ENCODE measurements at regions of chr12 and their contacts with region 1.

Region 1: GRCh38 chr12:71636704-71637115 is 26.9 kb downstream of the ZFC3H1 start:
- DNase-seq: peak; percentile 57
- ATAC-seq: peak; percentile 69
- H3K4me3 ChIP-seq: no peak overlapping the region
- H3K27ac ChIP-seq: no peak overlapping the region
- H3K4me1 ChIP-seq: peaks cover 0 to 4% of the 10 kb centered on the region in 2 experiments; a peak in 1 of 4 replicates
- H3K27me3 ChIP-seq: no peaks in the 10 kb centered on the region
- CTCF ChIP-seq: peak; percentile 42 to 79 (median 78); a peak in 5 of 6 replicates
- POLR2A ChIP-seq: no peak
- RAD21 ChIP-seq: peak; percentile 62

Region 2: DNA sequence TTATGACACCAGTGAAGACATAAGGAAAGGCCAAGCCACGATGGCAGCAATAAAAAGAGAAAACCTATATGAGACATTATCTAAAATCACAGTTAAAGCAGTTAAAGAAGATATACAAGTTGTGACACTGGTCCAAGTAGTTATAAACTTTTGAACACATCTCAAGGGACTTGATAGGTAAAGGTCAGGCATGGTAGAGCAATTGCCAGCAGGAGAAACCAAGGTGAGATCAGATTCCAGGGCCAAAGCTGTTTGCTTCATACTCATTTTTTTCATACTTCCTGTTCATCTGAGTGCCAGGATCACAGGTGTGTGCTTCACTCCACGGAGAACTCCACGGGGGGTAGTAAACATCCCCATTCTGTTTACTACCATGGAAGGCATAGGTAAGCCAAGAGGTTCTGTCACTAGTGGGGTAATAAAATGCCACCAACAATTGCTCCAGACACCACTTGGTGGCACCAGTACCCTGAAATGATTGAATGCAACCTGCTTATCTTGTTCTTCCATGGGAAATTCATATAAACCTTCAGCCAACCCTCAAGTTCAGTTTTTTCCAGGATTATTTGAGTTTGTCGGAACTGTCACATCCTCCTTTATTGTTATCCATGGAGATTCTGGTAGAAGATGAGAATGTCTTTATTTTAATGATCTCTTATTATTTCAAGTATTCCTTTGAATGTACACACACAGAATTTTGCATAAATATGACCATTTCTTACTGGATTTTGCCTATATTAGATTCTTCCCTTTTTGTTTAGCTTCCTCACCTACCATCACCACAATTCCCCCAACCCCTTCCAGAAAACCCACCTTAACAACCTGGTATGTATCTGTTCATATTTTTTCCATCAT is 419.8 kb before region 1 on chr12:
- CTCF ChIA-PET with region 1: no interaction called
- POLR2A ChIA-PET with region 1: no interaction called
- RAD21 ChIA-PET with region 1: no interaction called
- intact Hi-C with region 1: loop called (anchors 1 kb)
- DNase-seq: peak; percentile 55
- ATAC-seq: peak; percentile 84
- H3K4me3 ChIP-seq: no peak overlapping the region
- H3K27ac ChIP-seq: no peak overlapping the region
- H3K4me1 ChIP-seq: no peaks in the 10 kb centered on the region
- H3K27me3 ChIP-seq: no peaks in the 10 kb centered on the region
- CTCF ChIP-seq: peak; percentile 59 to 70 (median 70); a peak in 5 of 6 replicates
- POLR2A ChIP-seq: no peak
- RAD21 ChIP-seq: peak; percentile 81

Region 3: GRCh38 chr12:71415336-71416231 is 221.1 kb before region 1 on chr12:
- CTCF ChIA-PET with region 1: interaction called, 17 read pairs
- POLR2A ChIA-PET with region 1: no interaction called
- RAD21 ChIA-PET with region 1: no interaction called
- intact Hi-C with region 1: loop called (anchors 1 kb)
- DNase-seq: peak; percentile 42
- ATAC-seq: peak; percentile 90
- H3K4me3 ChIP-seq: no peak overlapping the region
- H3K27ac ChIP-seq: no peak overlapping the region
- H3K4me1 ChIP-seq: no peaks in the 10 kb centered on the region
- H3K27me3 ChIP-seq: no peaks in the 10 kb centered on the region
- CTCF ChIP-seq: peak; percentile 79 to 86 (median 81)
- POLR2A ChIP-seq: no peak
- RAD21 ChIP-seq: peak; percentile 87

Region 4: DNA sequence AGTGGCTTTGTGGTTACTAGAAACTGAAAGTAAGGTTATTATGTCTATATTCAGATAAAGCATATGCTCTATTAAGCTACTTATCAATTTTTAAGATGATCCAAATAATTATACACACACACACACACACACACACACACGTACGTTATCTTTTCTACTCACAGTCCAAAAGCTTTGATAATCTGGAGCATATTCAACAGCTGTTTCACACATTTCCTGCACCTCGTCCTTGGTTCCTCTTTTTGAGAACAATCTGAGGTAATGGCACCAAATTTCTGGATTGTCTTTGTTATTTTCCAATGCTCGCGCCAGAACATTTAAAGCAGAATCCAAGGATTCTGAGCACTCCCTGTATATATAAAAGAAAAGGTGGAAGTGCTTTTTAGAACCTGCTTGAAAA is 10.6 kb before region 1 on chr12:
- CTCF ChIA-PET with region 1: interaction called, 19 read pairs
- POLR2A ChIA-PET with region 1: no interaction called
- RAD21 ChIA-PET with region 1: no interaction called
- intact Hi-C with region 1: no loop called
- DNase-seq: no peak
- ATAC-seq: no peak
- H3K4me3 ChIP-seq: no peak overlapping the region
- H3K27ac ChIP-seq: no peak overlapping the region
- H3K4me1 ChIP-seq: no peaks in the 10 kb centered on the region
- H3K27me3 ChIP-seq: no peaks in the 10 kb centered on the region
- CTCF ChIP-seq: no peak
- POLR2A ChIP-seq: no peak
- RAD21 ChIP-seq: no peak

Region 5: GRCh38 chr12:71648537-71648936 is 11.8 kb after region 1 on chr12:
- CTCF ChIA-PET with region 1: interaction called, 16 read pairs
- POLR2A ChIA-PET with region 1: interaction called, 5 read pairs
- RAD21 ChIA-PET with region 1: no interaction called
- intact Hi-C with region 1: no loop called
- DNase-seq: no peak
- ATAC-seq: no peak
- H3K4me3 ChIP-seq: no peak overlapping the region
- H3K27ac ChIP-seq: no peak overlapping the region
- H3K4me1 ChIP-seq: no peaks in the 10 kb centered on the region
- H3K27me3 ChIP-seq: no peaks in the 10 kb centered on the region
- CTCF ChIP-seq: no peak
- POLR2A ChIP-seq: no peak
- RAD21 ChIP-seq: no peak

Region 6: DNA sequence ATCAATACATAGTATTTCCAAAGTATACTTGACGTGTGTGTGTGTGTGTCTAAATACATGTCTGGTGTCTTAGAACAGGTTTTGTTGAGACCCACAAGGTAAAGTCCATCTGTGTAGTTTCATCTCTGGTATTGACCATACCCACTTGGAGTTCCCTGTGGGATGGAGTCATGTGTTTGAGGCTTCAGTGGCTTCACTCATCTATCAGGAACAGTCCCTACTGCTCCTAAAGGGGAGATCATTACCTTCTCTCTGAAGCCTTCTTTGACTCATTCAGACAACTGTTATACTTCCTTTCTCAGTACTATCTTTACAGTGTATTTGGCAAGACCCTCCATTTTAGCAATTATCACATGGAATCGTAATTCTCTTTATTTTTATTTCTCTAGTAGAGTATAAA is 132.2 kb after region 1 on chr12:
- CTCF ChIA-PET with region 1: no interaction called
- POLR2A ChIA-PET with region 1: no interaction called
- RAD21 ChIA-PET with region 1: no interaction called
- intact Hi-C with region 1: no loop called
- DNase-seq: no peak
- ATAC-seq: no peak
- H3K4me3 ChIP-seq: no peak overlapping the region
- H3K27ac ChIP-seq: no peak overlapping the region
- H3K4me1 ChIP-seq: no peaks in the 10 kb centered on the region
- H3K27me3 ChIP-seq: no peaks in the 10 kb centered on the region
- CTCF ChIP-seq: no peak
- POLR2A ChIP-seq: no peak
- RAD21 ChIP-seq: no peak

Region 7: GRCh38 chr12:72547573-72547972 is 910.9 kb after region 1 on chr12:
- CTCF ChIA-PET with region 1: no interaction called
- POLR2A ChIA-PET with region 1: no interaction called
- RAD21 ChIA-PET with region 1: no interaction called
- intact Hi-C with region 1: no loop called
- DNase-seq: no peak
- ATAC-seq: no peak
- H3K4me3 ChIP-seq: no peak overlapping the region
- H3K27ac ChIP-seq: no peak overlapping the region
- H3K4me1 ChIP-seq: no peaks in the 10 kb centered on the region
- H3K27me3 ChIP-seq: no peaks in the 10 kb centered on the region
- CTCF ChIP-seq: no peak
- POLR2A ChIP-seq: no peak
- RAD21 ChIP-seq: no peak

Measured in HCT116 (cell line).